Activated T-helper 1 cell treated with anti-CD3 and anti-CD28 coated beads, Interleukin-12 subunit alpha, Interleukin-12 subunit beta, Interleukin-2, Interleukin-4 antibody, amounts not matched to agents 30 ng/mL and 10 ng/mL and 1 ng/mL, durations not matched to agents 14 hours and 24 hours and 36 hours (primary cell): ENCODE measurements at regions of chr13 and their contacts with region 1.

Region 1: DNA sequence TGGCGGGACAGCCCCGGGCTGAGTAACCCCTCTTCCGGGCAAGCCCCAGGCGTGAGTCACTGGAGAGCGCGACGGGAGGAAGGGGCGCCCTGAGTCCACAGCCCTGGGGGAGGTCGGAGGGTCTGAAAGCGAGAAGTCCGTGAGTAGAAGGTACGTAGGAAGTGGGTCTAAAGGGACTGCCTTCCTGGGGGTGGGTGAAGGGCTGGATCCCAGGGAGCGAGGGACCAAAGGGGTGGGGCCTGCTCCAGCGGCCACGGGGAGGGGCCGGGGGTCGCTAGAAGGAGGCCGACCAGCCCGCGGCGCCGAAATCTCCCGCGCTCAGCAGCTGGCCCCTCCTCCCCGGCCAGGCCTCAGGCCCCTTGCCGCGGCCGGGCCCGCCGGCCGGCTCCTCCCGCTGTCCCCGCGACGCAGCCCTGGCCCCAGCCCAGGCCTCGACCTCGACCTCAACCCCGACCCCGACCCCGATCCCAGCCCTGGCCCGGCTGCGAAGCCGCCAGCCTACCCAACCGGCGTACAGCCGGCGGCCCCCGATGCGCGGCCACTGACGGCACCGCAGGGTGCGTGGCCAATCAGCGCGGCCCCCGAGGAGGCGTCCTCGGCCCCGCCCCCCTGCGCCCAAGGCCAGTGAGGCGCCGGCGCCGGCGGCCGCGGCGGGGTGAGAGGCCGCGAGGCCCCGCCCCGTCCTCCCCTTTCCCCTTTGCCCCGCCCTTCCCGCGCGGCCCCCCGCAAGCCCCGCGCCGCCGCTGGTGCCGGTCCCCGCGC is 22.6 kb downstream of the IPO5 start:
- DNase-seq: peak; percentile 88
- H3K4me3 Mint-ChIP-seq: peak overlapping the region; percentile 93
- H3K27ac Mint-ChIP-seq: peak overlapping the region; percentile 98
- H3K4me1 Mint-ChIP-seq: peaks cover 33% of the 10 kb centered on the region
- H3K27me3 Mint-ChIP-seq: peaks cover 13% of the 10 kb centered on the region

Region 2: GRCh38 chr13:97221989-97222700 is 753.9 kb before region 1 on chr13 and contains the start of gene MBNL2:
- intact Hi-C with region 1: loop called (anchors 5 kb)
- DNase-seq: peak; percentile 80
- H3K4me3 Mint-ChIP-seq: peak within 1 kb of the TSS; percentile 87
- H3K27ac Mint-ChIP-seq: peak within 1 kb of the TSS; percentile 82
- H3K4me1 Mint-ChIP-seq: peaks cover 49% of the 10 kb centered on the region
- H3K27me3 Mint-ChIP-seq: no peaks in the 10 kb centered on the region
- total RNA-seq, gene MBNL2: 20.7 and 24.2 TPM in 2 replicates

Region 3: DNA sequence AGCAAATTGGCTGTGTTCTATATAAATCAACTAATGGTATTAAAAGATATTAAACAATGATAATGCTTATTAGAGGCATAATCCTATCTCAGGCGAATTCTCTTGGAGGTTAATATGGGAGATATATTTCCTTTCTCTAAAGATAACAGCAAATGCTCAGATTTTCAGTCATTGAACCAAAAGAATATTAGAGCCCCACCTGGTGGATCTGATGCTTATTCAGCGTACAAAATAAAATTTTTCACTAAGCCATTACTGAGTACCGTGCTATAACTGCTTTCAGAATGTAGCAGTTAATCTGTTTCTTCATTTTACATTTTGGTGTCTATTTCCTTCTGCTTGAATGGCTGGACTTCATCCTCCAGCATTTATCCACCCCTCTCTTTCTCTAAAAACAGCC is 165.9 kb before region 1 on chr13:
- intact Hi-C with region 1: no loop called
- DNase-seq: no peak
- H3K4me3 Mint-ChIP-seq: no peak overlapping the region
- H3K27ac Mint-ChIP-seq: no peak overlapping the region
- H3K4me1 Mint-ChIP-seq: no peaks in the 10 kb centered on the region
- H3K27me3 Mint-ChIP-seq: peaks cover 5% of the 10 kb centered on the region

Region 4: DNA sequence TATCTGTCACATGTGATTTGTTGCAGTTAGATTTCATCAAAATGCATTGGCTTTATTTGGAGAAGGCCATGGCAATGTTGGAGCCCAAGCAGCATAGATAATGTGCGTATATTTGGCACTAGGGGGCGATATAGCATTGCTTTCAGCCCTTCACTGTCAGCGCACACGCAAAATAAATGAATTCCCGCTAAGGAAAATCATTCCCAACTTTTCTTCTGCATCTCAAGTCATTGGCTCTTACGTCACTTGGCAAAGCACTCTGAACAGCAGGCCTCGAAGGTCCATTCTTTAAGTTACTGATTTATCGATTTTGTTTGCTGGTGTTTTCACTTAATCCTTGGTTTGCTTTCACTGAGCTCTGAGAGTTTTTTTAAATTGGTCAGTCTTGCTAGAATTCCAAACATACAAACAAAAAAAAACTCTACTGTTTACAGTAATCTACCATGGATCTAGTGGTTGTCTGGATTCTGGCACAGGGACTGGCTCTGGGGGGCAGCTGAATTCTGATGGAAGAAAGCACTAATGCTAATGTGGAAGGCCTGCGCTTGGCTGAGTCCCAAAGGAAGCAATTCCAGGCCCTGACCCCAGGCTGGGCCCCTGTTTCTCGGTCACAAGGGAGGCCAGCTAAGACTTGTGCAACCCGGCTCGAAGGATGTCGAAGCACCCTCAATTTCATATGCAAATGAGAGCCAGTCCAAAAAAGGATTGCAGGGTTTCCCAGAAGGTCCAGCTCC is 120.3 kb before region 1 on chr13:
- intact Hi-C with region 1: loop called (anchors 1 kb)
- DNase-seq: no peak
- H3K4me3 Mint-ChIP-seq: no peak overlapping the region
- H3K27ac Mint-ChIP-seq: no peak overlapping the region
- H3K4me1 Mint-ChIP-seq: no peaks in the 10 kb centered on the region
- H3K27me3 Mint-ChIP-seq: peaks cover 6% of the 10 kb centered on the region

Region 5: GRCh38 chr13:97961340-97961739 is 14.7 kb before region 1 on chr13:
- intact Hi-C with region 1: no loop called
- DNase-seq: no peak
- H3K4me3 Mint-ChIP-seq: no peak overlapping the region
- H3K27ac Mint-ChIP-seq: no peak overlapping the region
- H3K4me1 Mint-ChIP-seq: no peaks in the 10 kb centered on the region
- H3K27me3 Mint-ChIP-seq: peaks cover 8% of the 10 kb centered on the region

Region 6: DNA sequence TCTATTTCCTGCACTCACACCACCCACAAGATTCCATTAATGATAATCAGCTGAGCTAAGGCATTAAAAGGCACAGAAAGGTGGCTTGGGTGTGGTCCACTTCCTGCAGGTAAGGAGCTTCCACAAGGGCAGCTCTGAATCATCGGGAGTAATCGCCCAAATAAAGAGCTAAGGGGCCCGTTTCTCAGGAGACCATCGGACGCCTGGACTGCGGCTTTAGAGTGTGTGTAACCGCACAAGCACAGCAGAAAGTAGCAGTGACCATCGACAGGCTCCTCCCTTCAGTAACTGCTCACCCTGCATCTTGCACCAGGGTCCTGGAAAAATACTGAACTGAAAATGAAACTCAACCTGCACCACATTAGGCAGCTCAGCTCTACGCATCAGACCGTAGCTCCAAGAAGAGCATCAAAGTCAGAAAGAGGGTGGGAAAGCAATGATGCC is 594.9 kb after region 1 on chr13:
- intact Hi-C with region 1: loop called (anchors 5 kb)
- DNase-seq: peak; percentile 51
- H3K4me3 Mint-ChIP-seq: peak overlapping the region; percentile 81
- H3K27ac Mint-ChIP-seq: peak overlapping the region; percentile 91
- H3K4me1 Mint-ChIP-seq: peaks cover 98% of the 10 kb centered on the region
- H3K27me3 Mint-ChIP-seq: no peaks in the 10 kb centered on the region

Region 7: GRCh38 chr13:98910501-98910951 is 934.5 kb after region 1 on chr13:
- intact Hi-C with region 1: loop called (anchors 10 kb)
- DNase-seq: peak; percentile 49
- H3K4me3 Mint-ChIP-seq: peak overlapping the region; percentile 35
- H3K27ac Mint-ChIP-seq: peak overlapping the region; percentile 97
- H3K4me1 Mint-ChIP-seq: peaks cover 56% of the 10 kb centered on the region
- H3K27me3 Mint-ChIP-seq: no peaks in the 10 kb centered on the region